Activated T-helper 2 cell treated with anti-CD3 and anti-CD28 coated beads, Interferon-gamma antibody, Interleukin-2, Interleukin-4, amounts not matched to agents 10 μg/mL and 5 μg/mL and 100 μg/mL, durations not matched to agents 14 hours and 24 hours and 36 hours (primary cell): ENCODE measurements at regions of chr15 and their contacts with region 1.

Region 1: DNA sequence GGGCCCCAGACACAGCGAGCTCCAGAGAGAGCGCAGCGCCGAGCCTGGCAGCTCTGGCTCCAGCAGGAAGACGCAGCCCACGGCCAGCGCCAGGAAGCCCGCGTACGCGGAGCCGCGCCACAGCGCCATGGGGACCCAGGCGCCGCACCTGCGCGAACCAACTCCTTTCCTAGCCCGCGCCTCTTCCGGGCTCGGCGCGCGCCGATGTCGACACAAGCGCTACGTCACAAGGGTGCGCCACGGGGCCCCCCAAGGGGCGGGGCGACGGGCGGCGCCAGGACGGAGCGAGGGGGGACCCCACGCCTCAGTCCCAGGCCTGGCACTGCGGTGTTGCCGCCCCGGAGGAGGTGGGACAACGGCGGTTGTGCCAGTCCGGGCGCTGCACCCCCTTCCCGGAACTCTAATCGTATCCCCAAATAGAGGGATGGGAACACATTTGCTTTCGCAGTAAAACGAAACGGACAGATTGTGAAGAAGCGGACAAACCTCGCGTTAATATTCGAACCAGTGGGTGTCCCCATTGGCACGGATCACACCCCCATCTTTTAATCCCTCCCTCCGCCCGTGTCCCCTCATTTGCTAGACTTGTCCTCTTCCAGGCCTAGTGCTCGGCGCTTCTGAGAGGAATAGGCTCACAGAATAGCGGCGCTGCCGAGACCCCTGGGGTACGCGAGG is at the start of gene ADPGK:
- DNase-seq: peak; percentile 93
- H3K4me3 Mint-ChIP-seq: peak within 1 kb of the TSS; percentile 93
- H3K27ac Mint-ChIP-seq: peak within 1 kb of the TSS; percentile 98
- H3K4me1 Mint-ChIP-seq: peaks cover 66% of the 10 kb centered on the region
- H3K27me3 Mint-ChIP-seq: no peaks in the 10 kb centered on the region
- total RNA-seq, gene ADPGK: 84.1 and 95.0 TPM in 2 replicates

Region 2: GRCh38 chr15:72230196-72231065 is 553.3 kb before region 1 on chr15:
- intact Hi-C with region 1: loop called (anchors 10 kb)
- DNase-seq: peak; percentile 68
- H3K4me3 Mint-ChIP-seq: peak overlapping the region; percentile 99
- H3K27ac Mint-ChIP-seq: peak overlapping the region; percentile 100
- H3K4me1 Mint-ChIP-seq: peaks cover 33% of the 10 kb centered on the region
- H3K27me3 Mint-ChIP-seq: no peaks in the 10 kb centered on the region

Region 3: DNA sequence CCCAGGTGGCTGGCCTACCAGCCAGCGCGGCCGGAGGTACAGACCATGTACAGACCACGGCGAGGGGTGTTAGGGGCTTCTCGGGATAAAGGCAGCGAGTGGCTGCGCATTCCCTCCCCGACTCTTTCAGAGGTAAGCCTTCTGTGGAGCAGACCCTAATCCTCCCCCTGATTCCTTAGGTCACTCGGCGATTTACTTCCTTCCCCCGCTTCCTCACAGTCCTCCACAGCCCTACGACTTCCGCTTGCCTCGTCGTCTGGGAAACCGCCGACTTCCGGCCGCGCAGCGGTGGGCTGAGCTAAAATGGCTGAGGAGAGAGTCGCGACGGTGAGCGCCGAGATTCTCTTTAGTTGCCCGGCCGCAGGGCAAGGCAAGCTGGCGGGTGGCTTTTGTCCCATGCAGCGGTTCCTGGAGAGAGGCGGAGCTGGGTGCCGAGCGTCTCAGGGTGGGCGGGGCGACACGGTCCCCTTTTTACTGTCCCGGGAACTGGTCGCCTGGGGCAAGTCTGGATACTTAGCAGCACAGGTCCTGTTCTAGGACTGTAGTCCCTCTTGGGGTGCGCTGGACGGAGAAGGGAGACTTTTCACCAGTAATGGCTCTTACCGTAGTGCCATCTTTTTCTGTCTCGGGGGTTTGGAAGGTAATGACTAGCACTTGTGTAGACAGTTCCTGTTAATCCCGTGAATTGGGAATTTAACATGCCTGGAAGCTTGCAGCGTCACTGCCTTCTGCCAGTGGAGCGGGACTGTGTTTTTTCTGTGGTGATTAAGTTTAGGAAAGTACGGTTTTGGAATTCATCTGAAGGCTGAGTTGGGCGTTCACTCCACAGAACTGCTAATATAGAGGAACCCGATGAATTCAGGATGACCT is 97.5 kb before region 1 on chr15 and contains the starts of genes BBS4 and HIGD2B:
- intact Hi-C with region 1: loop called (anchors 10 kb)
- DNase-seq: peak; percentile 86
- H3K4me3 Mint-ChIP-seq: peak within 1 kb of the TSS; percentile 92
- H3K27ac Mint-ChIP-seq: peak within 1 kb of the TSS; percentile 90
- H3K4me1 Mint-ChIP-seq: peaks cover 18% of the 10 kb centered on the region
- H3K27me3 Mint-ChIP-seq: no peaks in the 10 kb centered on the region
- total RNA-seq, gene BBS4: 8.5 and 14.5 TPM in 2 replicates
- total RNA-seq, gene HIGD2B: 0.16 TPM in 2 replicates

Region 4: DNA sequence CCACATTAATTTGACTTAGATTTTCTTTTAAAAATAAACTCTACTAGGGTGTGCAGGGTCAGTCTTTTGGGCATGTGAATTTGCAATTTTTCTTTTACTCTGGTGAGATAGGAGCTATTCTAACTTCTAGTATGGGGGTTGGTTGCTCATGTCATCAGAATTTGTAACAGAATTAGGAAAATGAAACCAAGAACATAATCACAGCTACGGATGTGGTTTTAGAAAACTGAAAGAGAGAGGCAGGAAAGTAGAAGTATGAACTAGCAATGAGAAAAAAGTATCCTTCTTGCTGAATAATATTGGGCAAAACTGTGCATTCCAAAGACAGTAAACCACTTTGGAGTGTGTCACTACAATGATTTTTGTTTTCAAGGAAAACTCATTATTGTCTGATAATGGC is 43.5 kb before region 1 on chr15:
- intact Hi-C with region 1: loop called (anchors 5 kb)
- DNase-seq: no peak
- H3K4me3 Mint-ChIP-seq: peak overlapping the region; percentile 4
- H3K27ac Mint-ChIP-seq: peak overlapping the region; percentile 8
- H3K4me1 Mint-ChIP-seq: peaks cover 43% of the 10 kb centered on the region
- H3K27me3 Mint-ChIP-seq: no peaks in the 10 kb centered on the region

Region 5: DNA sequence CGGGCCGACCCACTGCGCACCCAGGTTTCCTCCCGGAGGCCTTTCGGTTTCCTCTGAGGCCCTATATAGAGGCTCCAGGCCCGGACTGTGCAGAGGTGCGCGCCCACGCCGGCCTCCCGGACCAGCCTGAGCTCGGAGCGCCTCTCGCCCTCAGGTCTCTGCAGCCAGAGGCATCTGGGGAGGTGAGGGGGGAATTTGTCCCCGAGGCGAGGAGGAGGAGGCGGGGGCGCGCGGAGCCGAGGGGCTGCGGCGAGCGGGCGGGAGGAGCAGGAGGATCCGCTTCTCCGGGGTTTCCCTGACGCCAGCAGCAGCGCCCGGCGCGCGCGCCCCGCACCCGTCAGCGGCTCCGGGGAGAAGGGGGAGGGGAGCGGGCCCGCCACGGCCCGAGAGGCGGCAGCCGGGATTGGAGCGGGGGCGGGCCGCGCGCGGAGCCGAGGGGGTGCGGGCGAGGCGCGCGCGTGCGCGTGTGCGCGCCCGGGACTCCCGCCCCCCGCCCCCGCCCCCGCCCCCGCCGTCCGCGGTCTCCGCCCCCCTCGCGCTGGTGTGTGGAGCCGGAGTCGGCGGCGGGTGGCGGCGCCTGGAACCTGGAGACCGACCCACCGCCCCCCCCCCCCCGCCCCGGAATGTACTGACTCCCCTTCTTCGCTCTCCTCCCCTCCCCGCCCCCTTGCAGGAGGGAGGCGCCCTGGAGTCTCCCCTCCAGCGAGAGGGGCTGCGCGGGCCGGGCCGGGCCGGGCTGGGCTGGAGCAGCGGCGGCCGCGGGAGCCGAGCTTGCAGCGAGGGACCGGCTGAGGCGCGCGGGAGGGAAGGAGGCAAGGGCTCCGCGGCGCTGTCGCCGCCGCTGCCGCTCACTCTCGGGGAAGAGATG is 268.3 kb after region 1 on chr15 and contains the start of gene NEO1:
- intact Hi-C with region 1: loop called (anchors 2 kb)
- DNase-seq: peak; percentile 71
- H3K4me3 Mint-ChIP-seq: peak within 1 kb of the TSS; percentile 78
- H3K27ac Mint-ChIP-seq: peak within 1 kb of the TSS; percentile 51
- H3K4me1 Mint-ChIP-seq: peaks cover 11% of the 10 kb centered on the region
- H3K27me3 Mint-ChIP-seq: peaks cover 33% of the 10 kb centered on the region
- total RNA-seq, gene NEO1: 9.8 and 12.5 TPM in 2 replicates

Region 6: GRCh38 chr15:73142802-73143762 is 359.4 kb after region 1 on chr15:
- intact Hi-C with region 1: loop called (anchors 5 kb)
- DNase-seq: no peak
- H3K4me3 Mint-ChIP-seq: peak overlapping the region; percentile 9
- H3K27ac Mint-ChIP-seq: peak overlapping the region; percentile 90
- H3K4me1 Mint-ChIP-seq: peaks cover 50% of the 10 kb centered on the region
- H3K27me3 Mint-ChIP-seq: no peaks in the 10 kb centered on the region